SK-N-SH (cell line): ENCODE measurements at regions of chr11 and their contacts with region 1.

Region 1: GRCh38 chr11:119284344-119285157 is 32.4 kb downstream of the MCAM start:
- DNase-seq: peak; percentile 36
- H3K4me3 ChIP-seq: no peak overlapping the region
- H3K27ac ChIP-seq: no peak overlapping the region
- H3K4me1 ChIP-seq: no peaks in the 10 kb centered on the region
- H3K27me3 ChIP-seq: no peaks in the 10 kb centered on the region
- CTCF ChIP-seq: peak; percentile 63
- EP300 ChIP-seq: no peak
- RAD21 ChIP-seq: peak; percentile 71

Region 2: DNA sequence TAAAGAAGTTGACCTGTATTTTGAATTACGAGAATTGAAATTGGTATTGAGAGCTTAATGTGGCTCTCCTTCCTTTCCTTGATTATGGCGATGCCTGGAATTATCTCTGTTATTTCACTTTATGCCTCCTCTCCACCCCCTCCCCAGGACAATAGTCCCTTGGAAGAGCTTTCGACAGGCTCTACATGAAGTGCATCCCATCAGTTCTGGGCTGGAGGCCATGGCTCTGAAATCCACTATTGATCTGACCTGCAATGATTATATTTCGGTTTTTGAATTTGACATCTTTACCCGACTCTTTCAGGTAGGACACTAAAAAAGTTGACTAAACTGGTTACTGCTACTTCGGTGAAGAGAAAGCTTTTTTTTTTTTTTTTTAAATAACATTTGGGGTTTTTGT is 10.8 kb before region 1 on chr11:
- CTCF ChIA-PET with region 1: interaction called, 19 read pairs
- POLR2A ChIA-PET with region 1: no interaction called
- DNase-seq: no peak
- H3K4me3 ChIP-seq: no peak overlapping the region
- H3K27ac ChIP-seq: no peak overlapping the region
- H3K4me1 ChIP-seq: no peaks in the 10 kb centered on the region
- H3K27me3 ChIP-seq: no peaks in the 10 kb centered on the region
- CTCF ChIP-seq: no peak
- EP300 ChIP-seq: no peak
- RAD21 ChIP-seq: no peak

Region 3: DNA sequence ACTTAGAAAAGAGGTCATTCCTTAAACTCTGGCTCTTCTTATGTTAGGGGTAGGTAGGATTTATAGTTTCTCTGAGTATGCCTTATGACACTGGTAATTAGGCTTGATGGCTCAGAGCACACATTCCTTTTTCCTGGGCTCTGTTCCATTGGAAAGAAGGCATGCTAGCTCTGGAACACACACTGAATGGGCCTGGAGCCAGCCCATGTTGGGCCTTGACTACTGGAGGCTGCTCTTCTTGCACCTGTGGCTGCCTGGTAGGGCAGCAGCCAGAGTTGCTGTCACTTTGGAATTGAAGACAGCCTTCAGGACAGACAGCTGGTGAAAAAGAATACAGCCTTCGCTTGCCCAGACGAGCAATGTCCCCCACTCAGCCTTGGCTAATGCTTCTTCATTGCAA is 14.2 kb after region 1 on chr11:
- CTCF ChIA-PET with region 1: interaction called, 11 read pairs
- POLR2A ChIA-PET with region 1: no interaction called
- DNase-seq: no peak
- H3K4me3 ChIP-seq: no peak overlapping the region
- H3K27ac ChIP-seq: no peak overlapping the region
- H3K4me1 ChIP-seq: peaks cover 0 to 3% of the 10 kb centered on the region in 2 experiments; a peak in 2 of 4 replicates
- H3K27me3 ChIP-seq: no peaks in the 10 kb centered on the region
- CTCF ChIP-seq: no peak
- EP300 ChIP-seq: no peak
- RAD21 ChIP-seq: no peak